ENCODE measurements at regions of chr10 and their contacts with region 1.

Region 1: GRCh38 chr10:69014171-69014570 is 25.6 kb downstream of the KIFBP start:
- DNase-seq: no peak
- ATAC-seq: no peak
- H3K4me3 ChIP-seq: no peak overlapping the region
- H3K27ac ChIP-seq: peak overlapping the region in 1 of 10 donors; percentile 49
- H3K4me1 ChIP-seq: peaks cover 0 to 16% (median 0%) of the 10 kb centered on the region in 9 donors
- H3K27me3 ChIP-seq: no peaks in the 10 kb centered on the region
- CTCF ChIP-seq: no peak

Region 2: DNA sequence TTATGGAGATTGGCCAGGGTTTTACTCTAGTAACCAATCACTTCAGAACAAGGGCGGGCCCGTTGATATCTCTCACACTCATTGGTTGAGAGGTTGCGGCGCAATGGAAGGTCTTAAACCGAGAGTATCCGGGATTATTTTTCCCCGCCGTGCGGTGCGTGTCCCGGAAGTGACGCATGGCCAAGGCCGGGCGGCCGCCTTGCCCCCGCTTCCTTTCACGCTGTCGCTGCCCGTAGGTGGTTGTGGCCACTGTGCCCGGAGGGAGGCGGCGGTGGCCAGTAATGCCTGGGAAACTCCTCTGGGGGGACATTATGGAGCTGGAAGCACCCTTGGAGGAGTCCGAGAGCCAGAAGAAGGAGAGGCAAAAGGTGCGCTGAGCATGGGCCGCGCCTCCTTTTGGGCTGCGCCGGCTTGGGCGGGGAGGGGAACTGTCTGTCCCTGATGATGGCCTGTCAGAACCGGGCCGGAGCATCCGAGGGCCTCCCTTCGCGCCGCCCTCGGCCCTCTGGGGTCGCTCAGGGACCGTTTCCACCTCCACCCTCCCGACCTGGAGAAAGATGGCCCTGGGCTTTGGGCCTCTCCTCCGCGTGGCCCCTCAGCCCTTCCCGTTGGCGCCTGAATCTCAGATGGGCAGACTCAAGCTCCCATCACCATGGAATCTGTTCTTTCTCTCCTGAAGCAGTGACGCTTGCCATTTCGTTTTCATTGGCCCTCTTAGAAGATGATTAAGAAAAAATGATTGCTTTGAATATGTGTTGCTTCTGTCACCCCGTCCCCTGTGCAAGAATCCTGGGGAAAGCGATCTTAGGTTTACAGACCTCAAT is 112.9 kb before region 1 on chr10 and contains the start of gene DDX50:
- intact Hi-C with region 1: no loop called
- DNase-seq: peak; percentile 93 to 98
- ATAC-seq: peak; percentile 98 to 99 (median 98)
- H3K4me3 ChIP-seq: peak within 1 kb of the TSS; percentile 72 to 95 (median 86)
- H3K27ac ChIP-seq: peak within 1 kb of the TSS; percentile 88 to 100 (median 98)
- H3K4me1 ChIP-seq: peaks cover 6 to 33% (median 23%) of the 10 kb centered on the region in 9 donors
- H3K27me3 ChIP-seq: no peaks in the 10 kb centered on the region
- CTCF ChIP-seq: peak in 4 of 9 donors; percentile 13 to 36 (median 22)
- total RNA-seq, gene DDX50: 18.3 to 21.7 (median 20.4) TPM

Region 3: GRCh38 chr10:68934994-68935393 is 79.2 kb before region 1 on chr10:
- intact Hi-C with region 1: no loop called
- DNase-seq: no peak
- ATAC-seq: no peak
- H3K4me3 ChIP-seq: no peak overlapping the region
- H3K27ac ChIP-seq: no peak overlapping the region
- H3K4me1 ChIP-seq: peaks cover 0 to 6% (median 0%) of the 10 kb centered on the region in 9 donors
- H3K27me3 ChIP-seq: no peaks in the 10 kb centered on the region
- CTCF ChIP-seq: no peak

Region 4: GRCh38 chr10:69045441-69046300 is 31.5 kb after region 1 on chr10:
- intact Hi-C with region 1: loop called in 2 of 10 experiments (anchors 5 kb)
- DNase-seq: no peak
- ATAC-seq: peak in 3 of 8 donors; percentile 30 to 51 (median 32)
- H3K4me3 ChIP-seq: peak overlapping the region in 1 of 10 donors; percentile 23
- H3K27ac ChIP-seq: peak overlapping the region in 4 of 10 donors; percentile 15 to 94 (median 46)
- H3K4me1 ChIP-seq: peaks cover 0 to 69% (median 0%) of the 10 kb centered on the region in 9 donors
- H3K27me3 ChIP-seq: no peaks in the 10 kb centered on the region
- CTCF ChIP-seq: no peak

Measured in heart right ventricle (tissue), 16 donors.